ENCODE measurements at regions of chr9 and their contacts with region 1.

Region 1: DNA sequence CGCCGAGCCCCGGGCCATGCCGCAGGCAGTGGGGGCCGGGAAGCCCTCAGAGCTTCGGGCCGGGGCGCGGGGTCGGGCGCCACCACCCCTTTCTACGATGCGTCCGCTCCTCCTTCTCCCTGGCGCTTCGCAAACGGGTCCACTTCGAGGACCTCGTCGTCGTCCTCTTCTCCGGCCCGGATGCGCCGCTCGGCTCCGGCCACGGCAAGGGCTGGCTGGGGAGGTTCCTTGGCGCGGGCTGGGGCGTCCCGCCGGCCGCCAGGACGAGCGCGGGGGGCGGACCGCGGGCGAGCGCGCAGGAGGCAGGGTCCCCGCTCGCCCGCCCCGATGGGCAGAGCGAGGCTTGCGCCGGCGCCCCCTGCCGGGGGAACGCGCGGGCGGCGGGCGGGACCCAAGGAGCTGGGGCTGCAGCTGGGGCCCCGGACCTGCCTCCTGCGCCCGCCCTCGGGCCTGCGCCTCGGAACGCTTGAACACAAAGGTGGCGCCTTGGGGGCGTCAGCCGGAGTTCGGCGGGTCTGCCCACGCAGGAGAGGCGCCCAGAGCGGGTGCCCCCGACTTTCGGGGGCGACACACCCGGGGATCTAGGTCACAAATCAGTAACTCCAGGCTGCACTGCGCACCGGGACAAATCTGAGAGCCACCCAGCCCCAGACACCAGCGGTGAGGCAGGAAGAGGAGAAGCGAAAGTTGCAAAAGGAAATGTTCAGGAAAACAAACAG is at the start of gene ROR2:
- DNase-seq: peak; percentile 76
- ATAC-seq: peak; percentile 95
- H3K4me3 Mint-ChIP-seq: peak within 1 kb of the TSS; percentile 79
- H3K27ac Mint-ChIP-seq: no peak within 1 kb of the TSS
- H3K4me1 Mint-ChIP-seq: peaks cover 14% of the 10 kb centered on the region
- H3K27me3 Mint-ChIP-seq: peaks cover 81% of the 10 kb centered on the region
- total RNA-seq, gene ROR2: 3.0 to 3.2 TPM

Region 2: GRCh38 chr9:91758491-91758981 is 191.6 kb before region 1 on chr9:
- CTCF ChIA-PET with region 1: interaction called, 22 read pairs
- DNase-seq: peak; percentile 62
- ATAC-seq: peak; percentile 60
- H3K4me3 Mint-ChIP-seq: no peak overlapping the region
- H3K27ac Mint-ChIP-seq: no peak overlapping the region
- H3K4me1 Mint-ChIP-seq: no peaks in the 10 kb centered on the region
- H3K27me3 Mint-ChIP-seq: peaks cover 18% of the 10 kb centered on the region

Region 3: DNA sequence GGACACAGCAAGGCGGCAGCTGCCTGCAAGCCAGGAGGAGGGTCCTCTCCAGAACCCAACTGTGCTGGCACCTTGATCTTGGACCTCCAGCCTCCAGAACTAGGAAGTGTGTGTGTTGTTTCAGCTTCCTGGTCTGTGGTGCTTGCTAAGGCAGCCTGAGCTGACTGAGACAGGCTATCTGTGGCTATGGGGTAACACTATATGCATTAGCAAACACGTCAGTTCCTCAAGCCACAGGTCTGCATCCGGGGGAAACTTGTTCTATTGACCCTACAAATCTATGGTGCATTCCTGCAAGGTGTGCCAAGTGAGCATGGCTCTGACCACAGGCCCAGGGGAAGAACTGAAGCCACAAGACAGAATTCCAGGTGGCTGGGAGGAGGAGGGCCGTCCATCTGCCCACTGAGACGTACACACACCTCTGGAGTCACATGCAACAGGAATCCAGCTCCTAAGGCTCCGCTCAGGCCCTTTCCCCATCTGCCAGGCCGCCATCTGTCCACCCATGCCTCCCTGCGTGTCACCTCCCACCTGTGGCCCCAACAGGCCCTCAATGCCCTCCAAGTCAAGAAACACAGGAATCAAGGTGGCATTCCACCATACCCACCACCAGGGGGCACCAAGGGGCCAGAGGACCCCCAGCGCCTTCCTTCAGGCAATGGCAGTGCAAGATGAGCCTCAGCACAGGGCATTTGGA is 174.9 kb before region 1 on chr9:
- CTCF ChIA-PET with region 1: interaction called, 74 read pairs
- DNase-seq: peak; percentile 83
- ATAC-seq: peak; percentile 88
- H3K4me3 Mint-ChIP-seq: no peak overlapping the region
- H3K27ac Mint-ChIP-seq: no peak overlapping the region
- H3K4me1 Mint-ChIP-seq: peaks cover 6% of the 10 kb centered on the region
- H3K27me3 Mint-ChIP-seq: peaks cover 36% of the 10 kb centered on the region

Region 4: DNA sequence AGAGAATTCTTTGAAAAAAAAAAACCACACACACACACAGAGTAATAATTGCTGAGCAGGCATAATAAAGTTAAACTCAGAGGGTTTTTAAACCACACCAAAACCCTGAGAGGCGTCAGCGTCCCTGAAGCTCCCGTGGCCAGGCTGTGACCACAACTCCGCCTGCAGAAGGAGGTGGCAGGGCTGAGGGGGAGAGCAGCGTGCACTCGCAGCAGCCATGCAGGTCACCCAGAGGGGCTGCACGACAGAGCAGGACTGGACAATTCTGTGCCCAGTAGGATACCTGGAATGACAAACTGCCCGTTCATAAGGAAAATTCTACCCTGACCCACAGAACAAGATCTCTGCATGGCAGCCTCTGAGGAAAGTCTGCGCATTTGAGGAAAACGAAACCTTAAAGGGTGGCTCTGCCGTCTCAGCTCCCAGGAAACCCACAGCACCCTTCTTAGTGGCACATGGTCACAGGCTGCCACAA is 44.1 kb before region 1 on chr9:
- CTCF ChIA-PET with region 1: interaction called, 16 read pairs
- DNase-seq: peak; percentile 94
- ATAC-seq: peak; percentile 94
- H3K4me3 Mint-ChIP-seq: no peak overlapping the region
- H3K27ac Mint-ChIP-seq: no peak overlapping the region
- H3K4me1 Mint-ChIP-seq: peaks cover 15% of the 10 kb centered on the region
- H3K27me3 Mint-ChIP-seq: peaks cover 6% of the 10 kb centered on the region

Region 5: GRCh38 chr9:92001244-92001643 is 51.1 kb after region 1 on chr9:
- CTCF ChIA-PET with region 1: no interaction called
- DNase-seq: no peak
- ATAC-seq: no peak
- H3K4me3 Mint-ChIP-seq: no peak overlapping the region
- H3K27ac Mint-ChIP-seq: no peak overlapping the region
- H3K4me1 Mint-ChIP-seq: no peaks in the 10 kb centered on the region
- H3K27me3 Mint-ChIP-seq: peaks cover 19% of the 10 kb centered on the region

Region 6: DNA sequence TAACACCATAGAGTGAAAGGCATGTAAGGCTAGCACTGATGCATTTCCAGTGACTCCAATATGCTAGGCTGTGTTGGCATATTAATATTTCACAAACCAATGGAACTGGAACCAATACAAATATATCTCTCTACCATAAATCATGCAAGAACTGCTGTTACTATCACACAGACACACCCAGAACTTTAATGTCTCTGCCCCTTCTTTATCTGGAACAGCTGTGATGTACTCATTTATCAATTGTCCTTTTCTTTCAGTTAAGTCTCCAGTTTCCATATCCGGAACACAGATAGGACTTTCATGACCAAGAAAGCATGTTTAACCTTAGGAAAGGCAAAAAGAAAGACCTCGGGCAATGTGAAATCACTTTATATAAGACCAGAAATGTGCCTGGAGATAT is 94.8 kb after region 1 on chr9:
- CTCF ChIA-PET with region 1: no interaction called
- DNase-seq: no peak
- ATAC-seq: no peak
- H3K4me3 Mint-ChIP-seq: no peak overlapping the region
- H3K27ac Mint-ChIP-seq: no peak overlapping the region
- H3K4me1 Mint-ChIP-seq: no peaks in the 10 kb centered on the region
- H3K27me3 Mint-ChIP-seq: no peaks in the 10 kb centered on the region